Activated B cell treated with CpG ODN at 0.5 μM for 24 hours (primary cell): ENCODE measurements at regions of chr10 and their contacts with region 1.

Region 1: DNA sequence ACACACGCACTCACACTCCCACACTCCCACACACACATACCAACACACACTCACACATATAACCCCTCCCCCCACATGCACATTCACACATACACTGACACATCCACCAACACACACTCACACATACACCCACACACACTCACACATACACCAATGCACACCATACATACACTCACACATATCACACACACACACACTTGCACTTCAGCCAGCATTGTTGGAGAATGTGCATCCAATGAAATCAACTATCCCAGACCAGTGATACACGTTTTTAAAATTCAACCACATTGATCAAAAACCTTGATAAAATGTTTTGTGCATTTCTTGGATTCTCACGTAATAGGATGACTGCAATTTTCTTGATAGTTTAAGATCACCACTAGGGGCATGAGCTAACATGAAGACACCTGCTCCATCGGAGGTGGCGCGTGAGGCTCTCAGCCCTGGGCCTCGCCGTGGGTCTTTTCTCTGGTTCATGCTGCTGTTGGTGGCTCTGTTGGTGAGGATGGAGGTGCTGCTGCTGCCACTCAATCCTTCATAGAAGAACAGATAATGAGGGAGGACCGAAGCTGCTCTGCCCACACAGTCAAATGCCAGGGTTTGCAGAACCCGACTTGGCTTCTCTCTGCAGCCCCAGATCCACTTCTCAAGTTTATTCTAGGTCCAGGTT is 32.2 kb upstream of the CHST15 start:
- DNase-seq: no peak
- ATAC-seq: peak; percentile 23
- H3K4me3 Mint-ChIP-seq: no peak overlapping the region
- H3K27ac Mint-ChIP-seq: no peak overlapping the region
- H3K4me1 Mint-ChIP-seq: peaks cover 3% of the 10 kb centered on the region
- H3K27me3 Mint-ChIP-seq: no peaks in the 10 kb centered on the region
- CTCF ChIP-seq: no peak

Region 2: GRCh38 chr10:124106241-124106879 is 19.2 kb before region 1 on chr10:
- CTCF ChIA-PET with region 1: interaction called, 7 read pairs
- POLR2A ChIA-PET with region 1: interaction called, 13 read pairs
- intact Hi-C with region 1: loop called (anchors 2 kb)
- DNase-seq: no peak
- ATAC-seq: peak; percentile 91
- H3K4me3 Mint-ChIP-seq: peak overlapping the region; percentile 69
- H3K27ac Mint-ChIP-seq: peak overlapping the region; percentile 81
- H3K4me1 Mint-ChIP-seq: peaks cover 75% of the 10 kb centered on the region
- H3K27me3 Mint-ChIP-seq: no peaks in the 10 kb centered on the region
- CTCF ChIP-seq: no peak

Region 3: GRCh38 chr10:124142960-124143359 is 17.4 kb after region 1 on chr10:
- CTCF ChIA-PET with region 1: no interaction called
- POLR2A ChIA-PET with region 1: interaction called, 3 read pairs
- intact Hi-C with region 1: loop called (anchors 2 kb)
- DNase-seq: no peak
- ATAC-seq: peak; percentile 49
- H3K4me3 Mint-ChIP-seq: no peak overlapping the region
- H3K27ac Mint-ChIP-seq: no peak overlapping the region
- H3K4me1 Mint-ChIP-seq: no peaks in the 10 kb centered on the region
- H3K27me3 Mint-ChIP-seq: no peaks in the 10 kb centered on the region
- CTCF ChIP-seq: no peak

Region 4: GRCh38 chr10:124152916-124153826 is 27.6 kb after region 1 on chr10:
- CTCF ChIA-PET with region 1: no interaction called
- POLR2A ChIA-PET with region 1: no interaction called
- intact Hi-C with region 1: loop called (anchors 2 kb)
- DNase-seq: peak; percentile 28
- ATAC-seq: peak; percentile 68
- H3K4me3 Mint-ChIP-seq: no peak overlapping the region
- H3K27ac Mint-ChIP-seq: no peak overlapping the region
- H3K4me1 Mint-ChIP-seq: peaks cover 16% of the 10 kb centered on the region
- H3K27me3 Mint-ChIP-seq: no peaks in the 10 kb centered on the region
- CTCF ChIP-seq: no peak

Region 5: GRCh38 chr10:124486635-124487034 is 361.1 kb after region 1 on chr10:
- CTCF ChIA-PET with region 1: no interaction called
- POLR2A ChIA-PET with region 1: no interaction called
- intact Hi-C with region 1: no loop called
- DNase-seq: no peak
- ATAC-seq: no peak
- H3K4me3 Mint-ChIP-seq: no peak overlapping the region
- H3K27ac Mint-ChIP-seq: no peak overlapping the region
- H3K4me1 Mint-ChIP-seq: no peaks in the 10 kb centered on the region
- H3K27me3 Mint-ChIP-seq: no peaks in the 10 kb centered on the region
- CTCF ChIP-seq: no peak